ENCODE measurements at regions of chr11 and their contacts with region 1.

Region 1: DNA sequence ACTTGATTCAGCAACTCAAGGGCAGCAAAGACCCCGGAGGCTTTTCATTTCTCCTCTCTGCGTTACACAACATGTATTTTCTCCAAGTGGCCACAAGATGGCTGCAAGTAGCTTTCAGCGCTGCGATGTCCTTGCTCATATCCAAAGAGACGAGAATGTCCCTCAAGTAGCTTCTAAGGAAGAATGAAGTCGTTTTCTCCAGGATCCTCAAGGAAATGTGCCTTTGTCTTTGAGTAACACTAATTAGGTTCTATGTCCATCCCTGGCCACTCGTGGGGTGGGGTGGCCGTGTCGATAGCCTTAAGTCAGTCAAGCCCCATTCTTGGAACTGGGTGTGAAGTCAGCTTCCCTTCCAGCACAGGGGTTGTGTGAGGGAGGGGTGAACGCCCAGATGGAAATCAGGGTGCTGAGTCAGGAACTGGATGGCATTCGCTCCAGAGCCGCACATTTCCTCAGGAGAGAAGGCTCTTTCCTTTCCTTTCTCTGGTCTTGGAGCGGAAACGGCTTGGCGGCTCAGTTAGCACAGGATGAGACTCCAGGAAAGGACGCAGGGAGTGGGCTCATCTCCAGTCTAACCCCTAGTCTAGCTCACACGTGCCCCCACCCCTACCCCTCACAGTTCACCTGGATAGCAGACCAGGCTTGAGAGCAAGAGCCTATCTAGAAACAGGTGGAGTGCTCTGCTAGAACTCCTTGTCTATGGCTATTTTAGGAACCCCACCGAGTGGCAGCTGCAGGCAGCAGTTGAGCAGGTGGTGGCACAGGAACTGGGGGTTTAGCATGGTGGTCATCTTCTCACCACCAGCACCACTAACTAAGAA is 44.3 kb downstream of the NNMT start:
- DNase-seq: peak; percentile 47
- H3K4me3 ChIP-seq: no peak overlapping the region
- H3K27ac ChIP-seq: no peak overlapping the region
- H3K27me3 ChIP-seq: no peaks in the 10 kb centered on the region
- CTCF ChIP-seq: peak; percentile 86

Region 2: GRCh38 chr11:114416441-114416961 is 76.0 kb after region 1 on chr11:
- in situ Hi-C with region 1: no loop called
- DNase-seq: peak; percentile 31
- H3K4me3 ChIP-seq: no peak overlapping the region
- H3K27ac ChIP-seq: no peak overlapping the region
- H3K27me3 ChIP-seq: no peaks in the 10 kb centered on the region
- CTCF ChIP-seq: no peak

Region 3: DNA sequence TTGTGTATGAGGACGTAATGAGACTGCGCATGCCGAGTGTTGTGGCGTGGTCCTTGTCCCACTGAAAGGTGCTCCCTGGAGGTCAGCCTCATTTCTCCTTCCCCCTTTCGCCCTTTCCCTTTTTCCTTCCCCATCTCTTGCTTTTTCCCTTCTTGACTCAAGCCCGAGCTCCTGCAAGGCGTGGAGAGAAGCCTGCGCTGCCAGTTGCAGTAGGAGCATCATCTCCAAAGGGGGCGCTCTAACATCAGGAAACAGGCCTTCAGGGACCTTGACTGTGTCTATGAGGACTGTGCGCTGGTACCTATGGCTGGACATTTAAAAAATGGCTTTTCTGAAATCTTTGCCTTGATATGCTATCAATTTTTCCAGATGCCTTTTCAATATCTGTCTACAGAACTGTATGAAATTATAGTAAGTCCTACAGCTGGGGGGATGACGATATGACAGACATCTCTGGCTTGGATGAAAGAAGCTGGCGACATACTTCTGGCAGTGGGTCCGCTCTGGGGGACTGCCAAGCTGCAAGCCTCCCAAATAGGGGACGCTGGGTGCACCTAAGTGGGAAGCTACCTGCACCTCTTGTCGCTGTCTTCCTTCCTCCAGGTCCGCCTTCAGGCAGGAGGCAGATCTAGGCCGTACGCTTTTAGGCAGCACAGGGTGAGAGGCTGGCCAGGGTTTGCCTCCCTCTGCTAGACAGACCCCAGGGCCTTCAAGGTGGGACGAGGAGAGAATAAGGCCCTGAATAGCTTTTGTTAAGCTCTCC is 434.3 kb after region 1 on chr11:
- in situ Hi-C with region 1: loop called (anchors 25 kb)
- DNase-seq: no peak
- H3K4me3 ChIP-seq: no peak overlapping the region
- H3K27ac ChIP-seq: no peak overlapping the region
- H3K27me3 ChIP-seq: no peaks in the 10 kb centered on the region
- CTCF ChIP-seq: peak; percentile 64

Measured in brain microvascular endothelial cell (primary cell).